GM12878 (cell line): ENCODE measurements at regions of chr17 and their contacts with region 1.

Region 1: DNA sequence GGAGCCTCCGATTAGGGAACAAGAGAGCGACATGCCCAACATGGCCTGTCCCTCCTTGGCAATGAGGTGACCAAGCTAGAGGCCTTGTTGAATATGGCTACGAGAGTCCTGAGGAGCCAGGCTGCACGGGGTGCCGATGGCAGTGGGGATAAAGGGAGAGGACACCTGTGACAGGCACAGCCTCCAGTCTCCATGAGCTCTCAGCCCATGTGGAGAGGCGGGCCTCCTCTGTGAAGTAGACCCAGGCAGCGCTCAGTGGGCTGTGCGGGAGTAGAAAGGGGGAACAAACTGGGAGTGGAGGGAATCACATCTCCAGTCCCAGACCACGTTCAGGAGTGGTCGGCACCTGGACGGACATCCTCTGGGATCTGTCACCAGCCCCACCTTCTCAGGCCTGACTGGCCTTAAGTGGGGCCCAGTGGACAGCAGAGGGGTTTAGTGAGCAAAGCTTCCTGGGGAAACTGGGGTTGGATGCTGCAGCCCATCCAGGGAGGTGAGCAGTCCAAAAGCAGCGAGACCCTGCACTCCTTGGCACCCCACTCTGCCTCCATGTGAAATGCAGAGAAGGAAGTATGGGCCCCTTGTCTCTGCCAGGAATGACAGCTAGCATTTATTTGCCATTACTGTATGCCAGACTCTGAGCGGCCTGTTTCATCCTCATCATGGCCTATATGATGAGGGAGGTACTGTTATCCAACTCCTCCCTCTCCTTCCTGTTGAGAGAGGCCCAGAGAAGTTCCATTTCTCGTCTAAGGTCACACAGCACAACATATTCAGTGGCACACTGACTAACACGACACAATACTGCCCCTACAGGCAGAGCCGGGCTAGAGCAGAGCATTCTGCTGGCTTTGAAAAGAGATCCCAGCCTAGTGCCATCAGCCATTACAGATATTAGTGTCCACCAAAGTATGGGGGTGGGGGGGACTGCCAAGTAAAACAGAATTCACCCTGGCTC is 4.5 kb upstream of the TMEM92 start:
- DNase-seq: peak; percentile 19
- ATAC-seq: peak; percentile 86
- H3K4me3 ChIP-seq: no peak overlapping the region
- H3K27ac ChIP-seq: no peak overlapping the region
- H3K4me1 ChIP-seq: no peaks in the 10 kb centered on the region; the same call in 1 of the 2 replicates
- H3K27me3 ChIP-seq: no peaks in the 10 kb centered on the region
- CTCF ChIP-seq: peak; percentile 77 to 87 (median 85)
- EP300 ChIP-seq: no peak
- POLR2A ChIP-seq: no peak
- RAD21 ChIP-seq: peak; percentile 65

Region 2: DNA sequence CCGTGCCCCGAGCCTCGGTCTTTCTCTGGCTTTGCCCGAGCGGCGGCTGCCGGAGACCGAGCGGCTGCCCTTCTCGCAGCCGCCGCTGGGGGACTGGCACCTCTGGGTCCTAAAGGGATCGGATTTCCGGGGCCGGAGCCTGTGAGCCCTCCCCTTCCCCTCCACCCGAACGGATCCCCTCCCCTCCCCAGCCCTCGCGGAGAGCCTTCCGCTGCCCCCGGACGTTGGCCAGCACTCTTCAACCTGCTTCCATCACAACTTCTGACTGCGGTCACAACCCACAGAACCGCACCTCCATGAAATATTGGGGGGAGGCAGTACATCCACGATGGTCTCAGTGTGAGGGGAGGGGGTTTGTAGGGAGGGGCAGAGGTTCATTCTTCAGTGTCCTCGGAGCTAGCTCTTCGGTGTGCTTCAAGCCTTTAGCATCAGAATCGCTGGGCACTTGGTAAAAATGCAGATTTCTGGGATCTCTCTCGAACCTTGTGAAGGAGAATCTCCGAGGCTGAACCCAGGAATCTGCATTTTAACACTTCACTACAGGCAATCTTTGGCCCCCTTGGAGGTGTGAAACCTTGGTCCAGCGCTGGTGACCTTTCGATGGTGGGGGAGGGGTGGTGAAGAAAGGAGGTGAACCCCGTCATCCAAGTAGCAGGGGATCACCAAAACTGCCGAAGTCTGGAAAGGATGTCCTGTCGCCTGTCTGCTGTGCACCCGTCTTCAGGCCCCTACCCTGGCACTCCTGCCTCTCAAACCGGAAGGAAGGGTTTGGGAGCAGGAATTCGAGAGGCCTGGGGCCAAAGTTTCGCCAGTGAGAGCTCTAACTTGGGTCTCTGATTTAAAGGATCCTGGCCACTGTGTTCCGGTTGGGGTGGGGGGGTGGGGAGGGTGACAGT is 118.5 kb before region 1 on chr17:
- CTCF ChIA-PET with region 1: no interaction called
- POLR2A ChIA-PET with region 1: no interaction called
- RAD21 ChIA-PET with region 1: no interaction called
- SMC1A ChIA-PET with region 1: no interaction called
- in situ Hi-C with region 1: no loop called
- intact Hi-C with region 1: no loop called
- DNase-seq: peak; percentile 63
- ATAC-seq: peak; percentile 67
- H3K4me3 ChIP-seq: peak overlapping the region; percentile 95
- H3K27ac ChIP-seq: peak overlapping the region; percentile 89
- H3K4me1 ChIP-seq: peaks cover 46% of the 10 kb centered on the region
- H3K27me3 ChIP-seq: no peaks in the 10 kb centered on the region
- CTCF ChIP-seq: peak; percentile 49 to 84 (median 66)
- EP300 ChIP-seq: no peak; a peak in 1 of 4 replicates
- POLR2A ChIP-seq: peak; percentile 70
- RAD21 ChIP-seq: no peak

Region 3: DNA sequence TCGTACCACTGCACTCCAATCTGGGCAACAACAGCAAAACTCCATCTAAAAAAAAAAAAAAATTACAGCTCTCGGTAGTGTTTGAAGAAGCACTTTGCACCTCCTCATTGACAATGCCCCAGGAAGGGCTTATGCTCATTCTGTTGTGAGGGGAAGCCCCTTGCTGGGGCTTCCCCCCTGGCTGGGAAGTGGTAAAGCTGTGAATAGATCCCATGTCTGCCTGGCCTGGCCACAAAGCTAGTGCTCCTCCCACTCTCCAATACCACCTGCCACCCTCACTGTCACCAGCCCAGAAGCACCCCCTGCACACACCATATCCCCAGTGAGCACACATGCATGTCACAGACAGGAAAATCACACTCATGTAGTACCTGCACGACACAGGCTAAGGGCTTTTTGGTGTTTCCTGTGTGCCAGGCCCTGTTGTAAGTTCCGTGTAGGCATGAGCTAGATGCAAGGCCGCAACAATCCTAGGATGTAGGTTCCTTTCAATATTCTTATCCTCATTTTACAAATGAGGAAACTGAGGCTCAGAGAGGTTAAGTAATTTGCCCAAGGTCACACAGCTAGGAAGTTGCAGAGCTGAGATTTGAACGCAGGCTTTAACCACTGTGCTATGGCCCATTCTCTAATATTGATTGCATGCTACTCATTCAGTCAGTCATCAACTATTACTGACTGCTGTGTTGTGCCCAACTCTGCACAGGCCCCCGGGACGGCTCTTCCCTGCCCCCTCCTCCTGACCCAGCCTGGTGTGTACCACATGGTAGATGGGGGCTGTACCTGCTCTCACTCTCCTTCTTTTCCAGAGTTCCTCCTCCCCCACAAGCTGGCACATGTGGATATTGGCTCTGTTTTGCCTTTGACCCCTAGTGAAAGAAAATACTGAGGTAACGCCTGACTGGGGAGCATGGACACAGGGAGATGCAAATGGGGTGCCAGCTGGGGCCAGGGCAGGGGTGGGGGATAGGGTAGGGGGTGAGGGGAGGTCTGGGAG is 56.4 kb before region 1 on chr17:
- CTCF ChIA-PET with region 1: interaction called, 85 read pairs
- POLR2A ChIA-PET with region 1: interaction called, 4 read pairs
- RAD21 ChIA-PET with region 1: interaction called, 8 read pairs
- SMC1A ChIA-PET with region 1: interaction called, 7 read pairs
- in situ Hi-C with region 1: loop called (anchors 5 kb)
- intact Hi-C with region 1: no loop called
- DNase-seq: peak; percentile 43
- ATAC-seq: peak; percentile 98
- H3K4me3 ChIP-seq: no peak overlapping the region
- H3K27ac ChIP-seq: no peak overlapping the region
- H3K4me1 ChIP-seq: peaks cover 12% of the 10 kb centered on the region
- H3K27me3 ChIP-seq: 0 out of 4 replicates have a peak, but pooled peaks cover 0 to 3% of the 10 kb centered on the region in 2 experiments
- CTCF ChIP-seq: peak in 2 of 3 experiments; percentile 14 to 20; a peak in 1 of 6 replicates
- EP300 ChIP-seq: peak in 1 of 2 experiments; percentile 53; a peak in 1 of 4 replicates
- POLR2A ChIP-seq: no peak
- RAD21 ChIP-seq: no peak

Region 4: DNA sequence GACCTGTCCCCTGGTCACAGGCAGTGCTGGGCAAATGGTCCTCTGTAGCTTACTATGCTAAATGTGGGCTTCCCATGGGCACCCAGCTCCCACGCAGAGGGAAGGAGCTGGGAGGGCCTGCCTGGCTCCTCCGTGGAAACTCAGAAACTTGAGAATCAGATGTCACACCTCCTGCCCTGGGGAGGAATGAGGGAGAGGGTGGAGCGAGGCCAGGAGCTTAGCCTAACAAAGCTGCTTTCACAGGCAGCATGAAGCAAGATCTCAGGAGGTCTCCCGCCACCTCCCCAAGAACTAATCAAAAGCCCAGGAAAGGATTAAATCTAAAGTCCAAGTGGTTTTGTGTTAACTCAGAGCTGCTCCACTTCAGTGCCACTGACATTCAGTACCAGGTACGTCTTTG is 42.6 kb after region 1 on chr17:
- CTCF ChIA-PET with region 1: interaction called, 10 read pairs
- POLR2A ChIA-PET with region 1: interaction called, 3 read pairs
- RAD21 ChIA-PET with region 1: interaction called, 4 read pairs
- SMC1A ChIA-PET with region 1: no interaction called
- in situ Hi-C with region 1: no loop called
- intact Hi-C with region 1: no loop called
- DNase-seq: no peak
- ATAC-seq: no peak
- H3K4me3 ChIP-seq: no peak overlapping the region
- H3K27ac ChIP-seq: no peak overlapping the region
- H3K4me1 ChIP-seq: peaks cover 17% of the 10 kb centered on the region
- H3K27me3 ChIP-seq: no peaks in the 10 kb centered on the region
- CTCF ChIP-seq: no peak
- EP300 ChIP-seq: no peak
- POLR2A ChIP-seq: no peak
- RAD21 ChIP-seq: no peak